SK-N-SH (cell line): ENCODE measurements at regions of chr1 and their contacts with region 1.

Region 1: GRCh38 chr1:205907794-205908193 is 35.5 kb downstream of the SLC26A9 start:
- DNase-seq: peak; percentile 20
- H3K4me3 ChIP-seq: no peak overlapping the region
- H3K27ac ChIP-seq: no peak overlapping the region
- H3K4me1 ChIP-seq: no peaks in the 10 kb centered on the region
- H3K27me3 ChIP-seq: no peaks in the 10 kb centered on the region
- CTCF ChIP-seq: peak; percentile 68
- EP300 ChIP-seq: no peak
- RAD21 ChIP-seq: peak; percentile 67

Region 2: DNA sequence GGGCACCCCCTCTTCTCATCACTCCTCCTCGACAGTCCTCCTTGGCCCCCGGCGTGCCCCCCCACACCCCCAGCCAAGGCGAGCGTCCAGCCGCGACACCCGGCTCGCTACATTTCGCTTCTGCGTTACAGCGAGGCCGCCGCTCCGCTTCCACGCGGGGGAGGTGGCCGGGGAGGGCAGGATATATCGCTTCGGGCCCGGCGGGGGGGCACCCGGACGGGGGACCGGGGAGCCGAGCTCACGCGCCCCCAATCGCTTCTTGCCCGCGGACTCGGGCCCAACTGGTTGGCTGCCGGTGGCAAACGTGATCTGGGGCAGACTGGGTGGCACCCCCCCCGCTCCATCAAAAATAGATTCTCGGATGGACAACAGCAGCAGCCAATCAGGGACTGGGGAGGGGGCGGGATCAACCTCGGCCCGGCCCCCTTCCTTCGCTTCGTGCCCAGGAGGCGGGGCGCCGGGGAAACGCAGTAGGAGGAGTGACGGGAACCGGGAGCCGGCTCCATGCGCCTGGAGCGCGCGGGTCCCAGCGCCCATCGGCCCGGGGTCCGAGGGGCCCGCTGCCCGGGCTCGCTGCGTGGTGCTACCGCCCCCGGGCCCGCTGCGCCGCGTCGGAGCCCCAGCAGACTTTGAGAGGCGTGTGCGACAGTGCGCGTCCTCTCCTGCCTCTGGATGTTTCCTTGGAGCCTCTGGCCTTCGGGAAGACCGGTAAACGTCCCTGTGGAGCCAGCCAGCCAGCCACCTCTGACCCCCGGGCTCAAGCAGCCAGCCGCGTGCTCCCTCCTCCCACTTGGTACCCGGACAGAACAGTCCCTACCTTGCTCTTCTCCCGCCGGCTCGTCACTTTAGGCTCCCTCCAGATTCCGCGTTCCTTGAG is 94.7 kb before region 1 on chr1 and contains the start of gene SLC41A1:
- CTCF ChIA-PET with region 1: interaction called, 14 read pairs
- POLR2A ChIA-PET with region 1: no interaction called
- DNase-seq: peak; percentile 100
- H3K4me3 ChIP-seq: peak within 1 kb of the TSS; percentile 77 to 94
- H3K27ac ChIP-seq: peak within 1 kb of the TSS; percentile 46 to 84
- H3K4me1 ChIP-seq: peaks cover 5 to 38% of the 10 kb centered on the region in 2 experiments; a peak in 2 of 4 replicates
- H3K27me3 ChIP-seq: no peaks in the 10 kb centered on the region
- CTCF ChIP-seq: no peak
- EP300 ChIP-seq: no peak
- RAD21 ChIP-seq: no peak
- polyA plus RNA-seq, gene SLC41A1: 18.3 and 25.1 TPM in 2 replicates

Region 3: GRCh38 chr1:205896320-205896719 is 11.5 kb before region 1 on chr1:
- CTCF ChIA-PET with region 1: interaction called, 10 read pairs
- POLR2A ChIA-PET with region 1: no interaction called
- DNase-seq: no peak
- H3K4me3 ChIP-seq: no peak overlapping the region
- H3K27ac ChIP-seq: no peak overlapping the region
- H3K4me1 ChIP-seq: peaks cover 0 to 8% of the 10 kb centered on the region in 2 experiments; a peak in 2 of 4 replicates
- H3K27me3 ChIP-seq: no peaks in the 10 kb centered on the region
- CTCF ChIP-seq: no peak
- EP300 ChIP-seq: no peak
- RAD21 ChIP-seq: no peak